Activated B cell treated with CpG ODN at 0.5 μM for 24 hours (primary cell): ENCODE measurements at regions of chrX and their contacts with region 1.

Region 1: DNA sequence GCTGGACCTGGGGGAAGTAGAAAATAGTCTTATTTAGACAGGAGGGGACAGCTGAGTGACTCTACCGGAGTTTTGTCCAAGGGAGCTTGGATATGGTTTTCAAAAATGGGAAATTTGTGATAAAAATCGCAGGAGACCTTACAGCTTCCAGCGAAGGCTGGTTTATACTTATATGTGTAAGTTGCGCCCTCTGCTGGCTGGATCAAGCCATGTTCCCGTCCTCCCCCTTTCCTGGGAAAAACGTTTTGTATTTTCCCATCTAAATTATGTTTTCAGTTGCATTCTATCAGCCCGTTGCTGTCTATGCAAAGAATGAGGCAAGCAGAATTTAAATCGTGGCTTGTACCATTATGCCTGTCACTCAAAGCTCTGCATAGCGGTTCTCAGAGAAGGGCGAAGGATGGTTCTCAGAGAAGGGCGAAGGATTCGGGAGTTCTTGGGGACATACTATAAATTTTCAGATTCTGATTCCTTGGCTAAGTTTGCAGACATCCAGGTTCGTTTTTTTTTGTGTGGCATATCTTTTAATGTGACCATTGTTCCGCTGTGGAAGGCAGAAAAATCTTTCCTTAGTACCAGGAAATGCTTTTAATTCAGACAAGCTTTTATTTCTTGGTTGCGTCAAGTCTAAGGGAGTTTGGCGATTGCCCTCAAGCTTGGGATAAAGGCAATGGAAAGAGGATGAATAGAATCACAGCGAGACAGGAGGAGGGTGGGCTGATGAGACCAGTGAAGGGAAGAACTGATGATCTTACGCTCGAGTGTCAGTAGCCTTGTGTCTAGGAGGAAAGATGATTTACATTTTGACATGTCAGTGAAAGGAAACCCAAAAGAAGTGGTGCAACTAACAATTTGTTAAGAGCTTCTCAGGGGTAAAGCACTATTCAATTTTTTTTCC is 128.5 kb upstream of the ARX start:
- DNase-seq: no peak
- ATAC-seq: no peak
- H3K4me3 Mint-ChIP-seq: no peak overlapping the region
- H3K27ac Mint-ChIP-seq: no peak overlapping the region
- H3K4me1 Mint-ChIP-seq: no peaks in the 10 kb centered on the region
- H3K27me3 Mint-ChIP-seq: no peaks in the 10 kb centered on the region
- CTCF ChIP-seq: no peak

Region 2: GRCh38 chrX:24395775-24396174 is 748.5 kb before region 1 on chrX:
- CTCF ChIA-PET with region 1: interaction called, 3 read pairs
- POLR2A ChIA-PET with region 1: no interaction called
- intact Hi-C with region 1: loop called (anchors 10 kb)
- DNase-seq: no peak
- ATAC-seq: peak; percentile 70
- H3K4me3 Mint-ChIP-seq: no peak overlapping the region
- H3K27ac Mint-ChIP-seq: no peak overlapping the region
- H3K4me1 Mint-ChIP-seq: no peaks in the 10 kb centered on the region
- H3K27me3 Mint-ChIP-seq: peaks cover 5% of the 10 kb centered on the region
- CTCF ChIP-seq: peak; percentile 49

Region 3: DNA sequence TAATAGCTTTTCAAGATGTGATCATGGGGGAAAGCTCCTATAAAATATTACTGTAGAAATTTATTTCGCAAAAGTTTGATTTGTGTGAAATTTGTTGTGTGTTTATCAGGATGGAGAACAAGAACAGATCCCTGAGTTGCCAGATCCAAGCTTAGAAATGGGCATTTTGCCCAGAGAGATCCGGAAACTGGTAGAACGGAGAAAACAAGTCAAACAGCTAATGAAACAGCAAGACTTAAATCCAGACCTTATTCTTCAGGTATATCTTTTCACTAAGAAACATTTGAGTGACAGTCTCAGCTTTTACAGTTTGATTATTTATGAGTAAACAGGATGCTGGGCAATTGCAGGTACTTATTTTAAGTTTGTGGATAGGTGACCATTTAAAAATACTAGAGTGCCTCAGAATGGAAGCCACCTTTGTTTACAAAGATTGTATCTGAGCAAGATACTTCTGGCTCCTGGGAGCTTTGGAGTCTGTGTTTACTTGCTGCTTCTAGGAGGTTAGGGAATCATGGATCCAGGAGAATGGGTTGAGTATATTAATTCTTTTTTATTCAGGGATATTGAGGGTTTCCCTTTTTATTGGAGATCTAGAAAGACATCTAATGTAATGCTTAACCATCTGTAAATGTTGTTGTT is 396.0 kb before region 1 on chrX:
- CTCF ChIA-PET with region 1: interaction called, 29 read pairs
- POLR2A ChIA-PET with region 1: no interaction called
- intact Hi-C with region 1: no loop called
- DNase-seq: no peak
- ATAC-seq: no peak
- H3K4me3 Mint-ChIP-seq: no peak overlapping the region
- H3K27ac Mint-ChIP-seq: no peak overlapping the region
- H3K4me1 Mint-ChIP-seq: no peaks in the 10 kb centered on the region
- H3K27me3 Mint-ChIP-seq: no peaks in the 10 kb centered on the region
- CTCF ChIP-seq: no peak

Region 4: DNA sequence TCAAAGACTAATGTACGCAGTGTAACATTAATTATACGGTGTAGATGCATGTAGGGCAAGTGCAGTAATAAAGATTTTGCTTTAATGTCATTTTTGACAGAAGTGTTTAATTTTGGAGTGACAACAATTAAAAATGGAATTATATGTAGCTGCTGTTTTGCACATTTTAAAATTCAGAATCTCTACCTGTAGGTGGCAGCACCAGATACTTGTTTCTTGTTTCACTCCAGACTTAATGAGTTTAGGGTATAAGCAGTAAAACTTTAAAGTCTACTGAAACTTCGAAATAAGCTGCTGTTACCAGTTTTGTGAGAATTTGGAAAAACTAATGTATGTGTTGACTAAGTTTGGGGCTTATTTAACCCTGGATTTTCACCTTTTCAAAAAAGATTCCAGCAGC is 305.7 kb before region 1 on chrX:
- CTCF ChIA-PET with region 1: interaction called, 27 read pairs
- POLR2A ChIA-PET with region 1: no interaction called
- intact Hi-C with region 1: loop called (anchors 1 kb)
- DNase-seq: no peak
- ATAC-seq: no peak
- H3K4me3 Mint-ChIP-seq: no peak overlapping the region
- H3K27ac Mint-ChIP-seq: no peak overlapping the region
- H3K4me1 Mint-ChIP-seq: peaks cover 10% of the 10 kb centered on the region
- H3K27me3 Mint-ChIP-seq: no peaks in the 10 kb centered on the region
- CTCF ChIP-seq: no peak

Region 5: GRCh38 chrX:25079020-25079419 is 65.3 kb before region 1 on chrX:
- CTCF ChIA-PET with region 1: no interaction called
- POLR2A ChIA-PET with region 1: no interaction called
- intact Hi-C with region 1: no loop called
- DNase-seq: no peak
- ATAC-seq: no peak
- H3K4me3 Mint-ChIP-seq: no peak overlapping the region
- H3K27ac Mint-ChIP-seq: no peak overlapping the region
- H3K4me1 Mint-ChIP-seq: no peaks in the 10 kb centered on the region
- H3K27me3 Mint-ChIP-seq: no peaks in the 10 kb centered on the region
- CTCF ChIP-seq: no peak

Region 6: DNA sequence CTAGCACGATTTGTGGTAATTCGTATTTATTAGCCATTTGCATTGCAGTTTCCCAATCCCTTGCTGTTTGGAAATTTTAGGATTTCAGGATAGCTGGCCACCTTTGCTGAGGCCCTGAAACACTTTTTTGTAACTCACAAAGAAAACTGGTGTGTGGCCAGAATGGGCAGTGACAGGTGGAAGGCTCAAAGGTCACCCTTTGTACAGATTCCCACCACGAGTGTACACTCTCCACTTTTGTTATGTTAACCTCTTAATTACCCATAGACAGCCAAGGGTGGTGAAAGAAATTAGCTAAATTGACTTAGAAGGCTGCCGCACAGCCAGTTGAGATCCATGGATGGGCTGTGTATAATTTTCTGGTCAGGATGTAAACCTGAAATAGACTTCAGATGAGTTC is 18.8 kb before region 1 on chrX:
- CTCF ChIA-PET with region 1: no interaction called
- POLR2A ChIA-PET with region 1: no interaction called
- intact Hi-C with region 1: no loop called
- DNase-seq: no peak
- ATAC-seq: no peak
- H3K4me3 Mint-ChIP-seq: no peak overlapping the region
- H3K27ac Mint-ChIP-seq: no peak overlapping the region
- H3K4me1 Mint-ChIP-seq: no peaks in the 10 kb centered on the region
- H3K27me3 Mint-ChIP-seq: no peaks in the 10 kb centered on the region
- CTCF ChIP-seq: no peak